ENCODE measurements at regions of chr11 and their contacts with region 1.

Region 1: GRCh38 chr11:3091791-3092602 is 34.8 kb upstream of the CARS1 start:
- DNase-seq: peak; percentile 83
- H3K4me3 Mint-ChIP-seq: no peak overlapping the region
- H3K27ac Mint-ChIP-seq: no peak overlapping the region
- H3K4me1 Mint-ChIP-seq: peaks cover 27% of the 10 kb centered on the region
- H3K27me3 Mint-ChIP-seq: no peaks in the 10 kb centered on the region
- CTCF ChIP-seq: peak; percentile 100

Region 2: GRCh38 chr11:2737866-2738265 is 354.1 kb before region 1 on chr11:
- CTCF ChIA-PET with region 1: no interaction called
- POLR2A ChIA-PET with region 1: no interaction called
- intact Hi-C with region 1: no loop called
- DNase-seq: peak; percentile 24
- H3K4me3 Mint-ChIP-seq: no peak overlapping the region
- H3K27ac Mint-ChIP-seq: no peak overlapping the region
- H3K4me1 Mint-ChIP-seq: peaks cover 17% of the 10 kb centered on the region
- H3K27me3 Mint-ChIP-seq: no peaks in the 10 kb centered on the region
- CTCF ChIP-seq: no peak

Region 3: DNA sequence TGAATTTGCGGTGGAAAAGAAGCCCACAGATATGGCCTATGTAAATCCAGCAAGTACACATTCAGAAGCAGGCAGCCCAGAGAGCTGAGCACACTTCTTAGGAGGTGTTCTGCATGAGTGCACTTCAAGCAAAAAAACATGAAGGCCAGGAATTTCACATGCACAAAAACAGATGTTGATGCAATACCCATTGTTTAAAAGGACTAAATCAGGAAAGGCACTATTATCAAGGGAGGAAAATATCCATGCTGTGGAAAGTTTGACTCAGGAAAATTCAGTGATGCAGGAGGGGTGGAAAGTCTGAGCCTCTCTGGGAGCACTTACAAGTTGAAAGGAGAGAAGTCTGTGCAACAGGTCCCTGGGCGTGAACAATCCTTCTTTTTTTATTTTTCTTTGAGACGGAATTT is 19.0 kb before region 1 on chr11:
- CTCF ChIA-PET with region 1: interaction called, 13 read pairs
- POLR2A ChIA-PET with region 1: interaction called, 3 read pairs
- intact Hi-C with region 1: no loop called
- DNase-seq: no peak
- H3K4me3 Mint-ChIP-seq: no peak overlapping the region
- H3K27ac Mint-ChIP-seq: no peak overlapping the region
- H3K4me1 Mint-ChIP-seq: peaks cover 4% of the 10 kb centered on the region
- H3K27me3 Mint-ChIP-seq: peaks cover 13% of the 10 kb centered on the region
- CTCF ChIP-seq: no peak

Region 4: GRCh38 chr11:3135481-3136440 is 43.8 kb after region 1 on chr11:
- CTCF ChIA-PET with region 1: no interaction called
- POLR2A ChIA-PET with region 1: no interaction called
- intact Hi-C with region 1: no loop called
- DNase-seq: no peak
- H3K4me3 Mint-ChIP-seq: no peak overlapping the region
- H3K27ac Mint-ChIP-seq: no peak overlapping the region
- H3K4me1 Mint-ChIP-seq: peaks cover 10% of the 10 kb centered on the region
- H3K27me3 Mint-ChIP-seq: no peaks in the 10 kb centered on the region
- CTCF ChIP-seq: no peak